ENCODE measurements at regions of chr17 and their contacts with region 1.

Region 1: GRCh38 chr17:82754297-82755208 is 2.7 kb downstream of the TBCD start:
- DNase-seq: peak in 1 of 2 experiments; percentile 63
- ATAC-seq: peak in 1 of 2 experiments; percentile 40; a peak in 3 of 6 replicates
- H3K4me3 ChIP-seq: no peak overlapping the region
- H3K27ac ChIP-seq: no peak overlapping the region
- H3K4me1 ChIP-seq: peaks cover 13% of the 10 kb centered on the region
- CTCF ChIP-seq: no peak
- EP300 ChIP-seq: no peak
- POLR2A ChIP-seq: no peak
- RAD21 ChIP-seq: no peak

Region 2: GRCh38 chr17:82551779-82552457 is 202.6 kb before region 1 on chr17:
- CTCF ChIA-PET with region 1: no interaction called
- POLR2A ChIA-PET with region 1: no interaction called
- DNase-seq: peak; percentile 81 to 96
- ATAC-seq: peak; percentile 96 to 97
- H3K4me3 ChIP-seq: no peak overlapping the region
- H3K27ac ChIP-seq: no peak overlapping the region
- H3K4me1 ChIP-seq: peaks cover 27% of the 10 kb centered on the region
- CTCF ChIP-seq: peak; percentile 74
- EP300 ChIP-seq: no peak
- POLR2A ChIP-seq: no peak
- RAD21 ChIP-seq: peak; percentile 73 to 77

Region 3: GRCh38 chr17:82687375-82687861 is 67.1 kb before region 1 on chr17:
- CTCF ChIA-PET with region 1: no interaction called
- POLR2A ChIA-PET with region 1: no interaction called
- DNase-seq: peak; percentile 83
- ATAC-seq: peak; percentile 48 to 75; a peak in 5 of 6 replicates
- H3K4me3 ChIP-seq: 0 out of 3 replicates have a peak overlapping the region, but pooled peaks have one; percentile 2
- H3K27ac ChIP-seq: peak overlapping the region; percentile 87 to 89
- H3K4me1 ChIP-seq: peaks cover 41% of the 10 kb centered on the region
- CTCF ChIP-seq: no peak
- EP300 ChIP-seq: peak in 1 of 2 experiments; percentile 17; a peak in 1 of 5 replicates
- POLR2A ChIP-seq: no peak
- RAD21 ChIP-seq: peak in 1 of 2 experiments; percentile 15; a peak in 1 of 5 replicates

Region 4: GRCh38 chr17:82716203-82717010 is 38.1 kb before region 1 on chr17 and contains the start of gene FN3KRP:
- CTCF ChIA-PET with region 1: no interaction called
- POLR2A ChIA-PET with region 1: no interaction called
- DNase-seq: peak; percentile 96 to 99
- ATAC-seq: peak; percentile 85 to 92
- H3K4me3 ChIP-seq: peak within 1 kb of the TSS; percentile 76
- H3K27ac ChIP-seq: peak within 1 kb of the TSS; percentile 70 to 87
- H3K4me1 ChIP-seq: peaks cover 10% of the 10 kb centered on the region
- CTCF ChIP-seq: no peak
- EP300 ChIP-seq: no peak
- POLR2A ChIP-seq: peak; percentile 79
- RAD21 ChIP-seq: no peak
- polyA plus RNA-seq, gene FN3KRP: 41.1 and 41.7 TPM in 2 replicates

Region 5: DNA sequence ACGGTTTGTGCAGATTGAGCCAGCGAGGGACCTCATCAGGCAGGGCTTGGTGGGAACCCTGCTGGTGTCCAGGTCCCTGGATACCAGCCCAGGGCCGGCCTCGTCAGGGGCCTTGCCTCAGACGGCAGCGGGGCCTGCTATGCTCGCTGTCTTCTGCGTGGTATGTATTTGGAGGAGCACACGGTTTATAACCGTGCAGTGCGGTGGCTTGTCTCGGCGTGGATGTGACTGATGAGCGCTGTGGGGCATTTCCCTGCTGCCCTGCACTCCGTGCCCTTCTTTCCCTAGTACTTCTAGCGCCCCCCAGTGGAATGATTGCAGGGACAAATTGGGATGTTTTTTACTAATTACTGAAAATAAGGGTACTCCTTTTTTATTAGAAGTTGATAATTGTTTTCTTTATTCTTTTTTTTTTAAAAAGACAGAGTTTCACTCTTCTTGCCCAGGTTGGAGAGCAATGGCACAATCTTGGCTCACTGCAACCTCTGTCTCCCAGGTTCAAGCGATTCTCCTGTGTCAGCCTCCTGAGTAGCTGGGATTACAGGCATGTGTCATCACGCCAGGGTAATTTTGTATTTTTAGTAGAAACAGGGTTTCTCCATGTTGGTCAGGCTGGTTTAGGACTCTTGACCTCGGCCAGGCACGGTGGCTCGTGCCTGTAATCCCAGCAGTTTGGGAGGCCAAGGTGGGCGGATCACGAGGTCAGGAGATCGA is 12.6 kb after region 1 on chr17:
- CTCF ChIA-PET with region 1: interaction called, 27 read pairs
- POLR2A ChIA-PET with region 1: no interaction called
- DNase-seq: peak; percentile 57 to 65
- ATAC-seq: peak; percentile 54 to 79; a peak in 4 of 6 replicates
- H3K4me3 ChIP-seq: no peak overlapping the region
- H3K27ac ChIP-seq: no peak overlapping the region
- H3K4me1 ChIP-seq: no peaks in the 10 kb centered on the region
- CTCF ChIP-seq: peak; percentile 84
- EP300 ChIP-seq: no peak
- POLR2A ChIP-seq: no peak
- RAD21 ChIP-seq: peak; percentile 76 to 83

Region 6: DNA sequence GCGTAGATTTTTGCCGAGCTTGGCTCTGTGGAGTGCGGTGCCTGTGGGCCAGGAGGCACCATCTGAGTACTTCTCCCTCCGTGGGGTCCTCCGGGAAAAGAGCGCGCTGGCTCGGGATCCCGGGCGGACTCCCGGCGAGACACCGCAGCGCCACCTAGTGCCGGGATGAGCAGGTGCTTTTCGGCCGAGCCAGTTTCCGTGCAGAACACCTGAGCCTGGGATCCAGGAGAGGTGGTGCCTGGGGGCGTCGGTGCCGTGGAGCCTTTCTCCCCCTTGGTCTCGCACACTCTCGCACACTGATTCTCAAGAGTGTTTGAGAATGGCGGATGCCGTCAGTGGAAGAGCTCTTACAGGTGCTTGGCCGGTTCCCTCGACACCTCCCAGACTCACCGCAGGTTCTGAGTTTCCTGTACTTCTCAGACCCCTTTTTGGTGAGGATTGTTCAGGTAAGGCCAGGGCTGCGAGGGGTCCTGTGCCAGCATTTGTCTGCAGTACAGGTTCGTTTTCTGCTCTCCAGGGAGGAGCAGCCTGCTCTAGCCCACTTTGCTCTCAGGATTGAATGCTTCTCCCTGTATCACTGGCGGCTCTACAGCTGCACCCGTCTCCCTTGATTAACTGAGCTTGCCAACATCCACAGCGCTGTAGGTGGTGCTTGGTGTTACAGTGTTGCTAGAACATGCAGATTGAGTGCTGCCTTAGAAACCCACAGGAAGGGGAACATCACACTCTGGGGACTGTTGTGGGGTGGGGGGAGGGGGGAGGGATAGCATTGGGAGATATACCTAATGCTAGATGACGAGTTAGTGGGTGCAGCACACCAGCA is 20.7 kb after region 1 on chr17:
- CTCF ChIA-PET with region 1: interaction called, 19 read pairs
- POLR2A ChIA-PET with region 1: no interaction called
- DNase-seq: peak; percentile 69 to 95
- ATAC-seq: peak; percentile 82 to 86
- H3K4me3 ChIP-seq: no peak overlapping the region
- H3K27ac ChIP-seq: no peak overlapping the region
- H3K4me1 ChIP-seq: no peaks in the 10 kb centered on the region
- CTCF ChIP-seq: peak; percentile 91
- EP300 ChIP-seq: no peak
- POLR2A ChIP-seq: no peak
- RAD21 ChIP-seq: peak; percentile 58 to 73

Region 7: GRCh38 chr17:82830249-82830661 is 75.7 kb after region 1 on chr17:
- CTCF ChIA-PET with region 1: no interaction called
- POLR2A ChIA-PET with region 1: no interaction called
- DNase-seq: no peak
- ATAC-seq: no peak
- H3K4me3 ChIP-seq: no peak overlapping the region
- H3K27ac ChIP-seq: no peak overlapping the region
- H3K4me1 ChIP-seq: no peaks in the 10 kb centered on the region
- CTCF ChIP-seq: no peak
- EP300 ChIP-seq: no peak
- POLR2A ChIP-seq: no peak
- RAD21 ChIP-seq: no peak

Measured in A549 (cell line).